ENCODE measurements at regions of chr4 and their contacts with region 1.

Region 1: GRCh38 chr4:140153718-140154571 is at the start of gene MAML3:
- DNase-seq: peak; percentile 76
- H3K4me3 Mint-ChIP-seq: peak within 1 kb of the TSS; percentile 86
- H3K27ac Mint-ChIP-seq: peak within 1 kb of the TSS; percentile 63
- H3K4me1 Mint-ChIP-seq: peaks cover 57% of the 10 kb centered on the region
- H3K27me3 Mint-ChIP-seq: peaks cover 69% of the 10 kb centered on the region
- total RNA-seq, gene MAML3: 0.32 and 0.47 TPM in 2 replicates

Region 2: GRCh38 chr4:139083956-139084803 is 1069.8 kb before region 1 on chr4:
- intact Hi-C with region 1: loop called (anchors 2 kb)
- DNase-seq: peak; percentile 78
- H3K4me3 Mint-ChIP-seq: peak overlapping the region; percentile 86
- H3K27ac Mint-ChIP-seq: peak overlapping the region; percentile 98
- H3K4me1 Mint-ChIP-seq: peaks cover 28% of the 10 kb centered on the region
- H3K27me3 Mint-ChIP-seq: no peaks in the 10 kb centered on the region

Region 3: DNA sequence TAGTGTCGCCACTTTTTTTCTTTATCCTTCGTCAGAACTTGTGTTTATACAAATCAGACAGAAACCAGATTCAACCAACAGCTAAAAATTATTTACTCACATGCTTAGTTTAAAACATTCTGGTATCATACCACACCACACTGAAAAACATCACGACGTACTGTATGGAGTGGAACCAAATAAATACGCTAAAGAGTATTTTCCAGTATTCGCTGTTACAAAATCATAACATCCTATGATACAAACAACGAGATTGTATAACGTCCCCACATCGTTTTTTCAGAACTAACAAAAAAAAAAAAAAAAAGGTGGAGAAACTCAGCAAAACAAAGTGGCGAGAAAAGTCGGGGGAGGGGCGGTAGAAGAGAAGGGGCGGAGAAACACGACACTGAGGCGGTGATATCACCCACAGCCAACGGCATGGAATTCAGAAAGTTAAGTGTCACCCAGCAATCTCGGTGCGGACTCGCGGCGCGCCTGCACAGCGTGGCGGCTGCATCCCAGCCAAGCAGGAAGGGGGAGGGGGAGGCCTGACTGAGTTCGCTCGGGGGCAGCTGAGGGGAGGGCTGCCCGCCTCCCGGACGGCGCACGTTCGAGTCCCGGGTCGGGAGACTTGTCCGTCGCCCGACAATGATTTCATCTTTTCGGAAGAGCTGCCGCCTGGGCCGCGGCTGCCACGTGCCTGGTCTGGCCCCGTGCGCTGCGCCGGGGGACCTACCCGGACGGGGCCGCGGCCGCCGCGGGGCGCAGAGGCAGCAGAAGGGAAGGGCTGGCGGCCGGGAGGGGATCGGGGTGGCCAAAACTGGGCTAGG is 598.8 kb before region 1 on chr4:
- intact Hi-C with region 1: loop called (anchors 5 kb)
- DNase-seq: peak; percentile 78
- H3K4me3 Mint-ChIP-seq: peak overlapping the region; percentile 93
- H3K27ac Mint-ChIP-seq: peak overlapping the region; percentile 96
- H3K4me1 Mint-ChIP-seq: peaks cover 47% of the 10 kb centered on the region
- H3K27me3 Mint-ChIP-seq: peaks cover 13% of the 10 kb centered on the region

Region 4: GRCh38 chr4:139950568-139950967 is 203.4 kb before region 1 on chr4:
- intact Hi-C with region 1: loop called (anchors 1 kb)
- DNase-seq: peak; percentile 57
- H3K4me3 Mint-ChIP-seq: peak overlapping the region; percentile 48
- H3K27ac Mint-ChIP-seq: peak overlapping the region; percentile 85
- H3K4me1 Mint-ChIP-seq: peaks cover 49% of the 10 kb centered on the region
- H3K27me3 Mint-ChIP-seq: peaks cover 9% of the 10 kb centered on the region

Region 5: DNA sequence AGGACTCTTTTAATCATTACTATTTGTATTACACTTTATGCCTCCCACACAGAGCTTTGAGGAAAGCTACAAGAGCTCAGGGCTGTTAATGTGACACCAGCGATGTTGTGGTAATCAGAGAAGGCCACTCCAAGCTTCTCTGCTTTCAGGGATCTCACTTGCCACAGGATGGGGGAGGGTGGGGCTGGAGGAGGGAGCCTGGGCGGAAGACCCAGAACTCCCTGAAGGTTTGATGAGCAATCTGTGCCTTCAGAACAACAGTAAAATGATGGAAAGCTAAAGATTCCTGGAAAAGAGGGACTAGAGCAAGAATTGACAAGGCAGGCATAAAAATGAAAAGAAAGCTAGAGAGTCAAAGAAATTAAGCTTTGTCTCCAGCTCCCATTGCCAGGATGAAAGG is 75.6 kb before region 1 on chr4:
- intact Hi-C with region 1: no loop called
- DNase-seq: no peak
- H3K4me3 Mint-ChIP-seq: no peak overlapping the region
- H3K27ac Mint-ChIP-seq: no peak overlapping the region
- H3K4me1 Mint-ChIP-seq: peaks cover 45% of the 10 kb centered on the region
- H3K27me3 Mint-ChIP-seq: peaks cover 59% of the 10 kb centered on the region

Region 6: DNA sequence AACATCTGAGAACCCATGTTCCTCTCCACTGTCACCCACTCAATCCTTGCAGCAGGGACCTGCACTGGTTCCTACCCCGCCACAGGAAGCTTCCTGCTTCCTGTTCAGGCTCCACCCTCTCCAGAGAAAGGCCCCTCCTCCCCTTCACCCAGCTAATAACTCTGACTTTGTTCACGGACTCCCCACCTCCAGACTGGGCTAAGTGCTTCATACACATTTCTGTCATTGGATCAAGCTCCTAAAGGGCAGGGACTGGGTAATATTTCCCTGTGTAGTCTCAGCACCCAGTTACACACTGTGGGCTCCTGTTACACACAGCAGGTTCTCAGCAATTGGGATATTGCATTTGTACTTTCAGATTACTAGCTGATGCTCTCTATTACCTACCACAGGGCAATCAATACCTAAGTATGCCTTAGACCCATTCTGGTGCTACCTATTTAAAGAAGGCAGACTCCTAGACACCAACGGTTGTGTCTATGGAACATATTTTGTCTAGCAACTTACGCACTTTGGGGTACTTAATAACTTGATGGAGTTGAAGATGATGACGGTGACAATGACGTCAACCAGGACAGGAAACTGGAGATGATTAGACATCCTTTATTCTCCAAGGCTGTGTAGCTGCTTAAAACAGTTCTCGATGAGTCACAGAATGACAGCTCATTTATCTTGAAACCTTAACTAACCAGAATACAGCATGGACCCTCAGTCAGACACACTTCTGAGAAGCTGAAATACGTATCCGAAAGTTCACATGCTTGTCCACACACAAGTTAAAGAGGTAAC is 58.1 kb before region 1 on chr4:
- intact Hi-C with region 1: loop called (anchors 1 kb)
- DNase-seq: peak; percentile 63
- H3K4me3 Mint-ChIP-seq: peak overlapping the region; percentile 80
- H3K27ac Mint-ChIP-seq: peak overlapping the region; percentile 94
- H3K4me1 Mint-ChIP-seq: peaks cover 89% of the 10 kb centered on the region
- H3K27me3 Mint-ChIP-seq: peaks cover 3% of the 10 kb centered on the region

Region 7: DNA sequence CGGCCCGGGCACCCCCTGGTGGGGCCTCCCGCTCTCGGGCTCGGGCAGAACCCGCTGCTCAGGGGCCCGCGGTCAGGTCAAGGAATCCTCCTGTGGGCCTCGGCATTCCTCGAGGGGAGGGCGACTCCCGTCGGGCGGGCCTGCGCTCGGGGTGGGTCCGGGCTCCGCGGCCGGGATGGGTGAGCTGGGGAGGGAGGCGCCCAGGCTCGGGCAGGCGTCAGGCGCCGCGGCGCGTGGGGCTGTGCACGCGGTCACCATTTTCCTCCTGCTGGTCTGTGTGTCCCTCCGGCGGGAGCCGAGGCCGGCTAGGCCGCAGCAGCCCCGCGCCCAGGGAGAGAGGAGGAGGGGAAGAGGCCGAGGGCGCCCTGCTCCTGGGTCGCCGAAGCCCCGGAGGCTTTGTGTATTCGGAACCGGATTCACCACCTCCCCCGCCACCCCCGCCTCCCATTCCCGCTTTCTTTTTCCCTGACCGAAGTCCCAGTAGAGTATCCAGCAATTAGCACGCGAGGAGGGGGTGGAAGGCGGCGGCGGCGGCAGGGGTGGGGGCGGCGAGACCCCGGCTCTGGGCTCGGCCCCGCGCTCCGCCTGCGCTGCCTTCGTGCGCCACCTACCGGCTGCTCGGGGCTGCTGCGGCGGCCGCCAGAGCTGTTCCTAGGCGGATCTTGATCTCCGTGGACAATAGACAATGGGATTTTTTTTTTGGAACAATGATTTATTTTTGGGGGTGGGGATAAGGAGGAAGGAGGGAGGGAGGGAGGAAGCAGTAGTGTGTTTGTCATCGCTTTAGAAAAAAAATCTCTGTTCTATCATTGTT is 99.0 kb after region 1 on chr4:
- intact Hi-C with region 1: loop called (anchors 1 kb)
- DNase-seq: peak; percentile 32
- H3K4me3 Mint-ChIP-seq: peak overlapping the region; percentile 76
- H3K27ac Mint-ChIP-seq: peak overlapping the region; percentile 59
- H3K4me1 Mint-ChIP-seq: peaks cover 28% of the 10 kb centered on the region
- H3K27me3 Mint-ChIP-seq: peaks cover 36% of the 10 kb centered on the region